ENCODE measurements at regions of chrX and their contacts with region 1.

Region 1: GRCh38 chrX:153539171-153539978 is 21.9 kb downstream of the ATP2B3 start:
- DNase-seq: peak; percentile 29
- H3K4me3 Mint-ChIP-seq: no peak overlapping the region
- H3K27ac Mint-ChIP-seq: no peak overlapping the region
- H3K4me1 Mint-ChIP-seq: no peaks in the 10 kb centered on the region
- H3K27me3 Mint-ChIP-seq: no peaks in the 10 kb centered on the region

Region 2: DNA sequence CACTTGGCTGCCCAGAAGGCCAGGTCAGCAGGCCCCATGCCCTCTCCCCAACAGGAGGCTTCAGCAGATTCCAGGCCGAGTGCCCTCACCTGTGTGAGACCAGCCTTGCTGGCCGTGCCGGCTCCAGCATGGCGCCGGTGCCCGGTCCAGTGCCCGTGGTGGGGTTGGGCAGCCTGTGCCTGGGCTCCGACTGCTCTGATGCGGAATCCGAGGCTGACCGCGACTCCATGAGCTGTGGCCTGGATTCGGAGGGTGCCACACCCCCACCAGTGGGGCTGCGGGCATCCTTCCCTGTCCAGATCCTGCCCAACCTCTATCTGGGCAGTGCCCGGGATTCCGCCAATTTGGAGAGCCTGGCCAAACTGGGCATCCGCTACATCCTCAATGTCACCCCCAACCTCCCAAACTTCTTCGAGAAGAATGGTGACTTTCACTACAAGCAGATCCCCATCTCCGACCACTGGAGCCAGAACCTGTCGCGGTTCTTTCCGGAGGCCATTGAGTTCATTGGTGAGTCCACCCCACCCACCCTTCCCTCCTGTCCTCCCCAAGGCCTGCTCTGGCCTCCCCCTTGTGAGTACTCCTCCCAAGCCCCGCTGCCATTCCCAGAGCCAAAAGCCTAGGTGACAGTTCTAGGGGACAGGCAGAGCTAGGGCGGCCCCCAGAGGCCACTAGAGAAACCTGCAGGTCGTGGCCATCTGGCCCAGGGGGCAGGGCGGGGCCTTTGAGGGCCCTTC is 110.0 kb after region 1 on chrX:
- intact Hi-C with region 1: loop called (anchors 1 kb)
- DNase-seq: no peak
- H3K4me3 Mint-ChIP-seq: no peak overlapping the region
- H3K27ac Mint-ChIP-seq: no peak overlapping the region
- H3K4me1 Mint-ChIP-seq: no peaks in the 10 kb centered on the region
- H3K27me3 Mint-ChIP-seq: peaks cover 22% of the 10 kb centered on the region

Region 3: GRCh38 chrX:153662266-153662665 is 122.9 kb after region 1 on chrX:
- intact Hi-C with region 1: loop called (anchors 1 kb)
- DNase-seq: peak; percentile 11
- H3K4me3 Mint-ChIP-seq: peak overlapping the region; percentile 37
- H3K27ac Mint-ChIP-seq: no peak overlapping the region
- H3K4me1 Mint-ChIP-seq: no peaks in the 10 kb centered on the region
- H3K27me3 Mint-ChIP-seq: peaks cover 21% of the 10 kb centered on the region

Measured in activated T-helper 1 cell treated with anti-CD3 and anti-CD28 coated beads, Interleukin-12 subunit alpha, Interleukin-12 subunit beta, Interleukin-2, Interleukin-4 antibody, amounts not matched to agents 30 ng/mL and 10 ng/mL and 1 ng/mL, durations not matched to agents 14 hours and 24 hours and 36 hours (primary cell).